Cardiac septum (tissue), 1 donor: ENCODE measurements at regions of chr10 and their contacts with region 1.

Region 1: GRCh38 chr10:35387768-35388167 is 51.5 kb downstream of the CCNY start:
- DNase-seq: no peak

Region 2: DNA sequence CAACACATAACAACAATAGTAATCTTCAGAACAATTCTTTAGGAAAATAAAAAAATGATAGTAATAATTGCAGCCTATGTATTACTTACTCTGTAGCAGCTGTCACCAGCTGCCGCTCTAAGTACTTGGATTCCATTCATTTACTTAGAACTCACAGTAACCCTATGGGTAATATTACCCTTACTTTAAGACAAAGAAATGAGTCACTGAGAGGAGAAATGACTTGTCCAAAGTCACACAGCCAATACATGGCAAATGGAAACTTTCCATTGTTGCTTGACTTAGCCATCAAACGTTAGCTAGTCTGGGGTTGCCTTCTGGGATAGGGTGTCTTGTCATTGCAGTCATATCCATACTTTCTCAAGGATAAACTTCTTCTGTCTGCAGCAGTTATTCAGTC is 47.8 kb before region 1 on chr10:
- intact Hi-C with region 1: no loop called
- DNase-seq: no peak

Region 3: DNA sequence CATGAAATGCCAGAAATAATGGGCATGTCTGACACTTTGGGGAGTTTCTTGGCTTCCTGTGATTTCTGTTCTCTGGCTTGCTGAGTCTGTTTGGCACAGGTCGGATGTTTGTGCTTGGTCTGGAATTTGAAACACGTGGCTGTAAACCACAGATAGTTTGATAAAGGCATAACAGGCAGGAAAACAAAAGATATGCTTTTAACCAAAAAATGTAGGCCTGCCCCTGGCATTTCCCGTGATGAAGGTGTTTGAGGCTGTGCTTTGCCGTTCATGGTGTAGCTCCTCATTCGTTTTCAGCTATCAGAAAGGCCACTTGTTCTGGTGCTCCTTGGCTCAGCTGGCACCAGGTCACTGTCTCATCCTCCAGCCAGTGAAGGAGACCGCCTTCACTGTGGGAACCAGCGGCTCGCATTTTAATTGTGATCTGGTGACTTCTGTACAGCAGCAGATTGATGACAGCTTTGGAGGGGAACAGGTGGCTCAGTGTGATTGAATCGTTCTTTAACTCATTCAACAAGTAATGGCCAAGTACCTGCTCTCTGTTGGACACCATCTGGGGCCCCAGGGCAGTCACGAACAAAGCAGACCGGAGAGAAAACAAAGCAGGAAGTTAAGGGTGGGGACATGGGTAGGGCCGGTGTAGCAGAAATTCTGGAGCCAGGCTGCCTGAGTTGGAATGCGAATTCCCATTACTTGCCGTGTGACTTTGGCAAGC is 60.1 kb after region 1 on chr10:
- intact Hi-C with region 1: loop called (anchors 5 kb)
- DNase-seq: no peak